Activated B cell treated with CpG ODN at 0.5 μM for 24 hours (primary cell): ENCODE measurements at regions of chr16 and their contacts with region 1.

Region 1: GRCh38 chr16:74695450-74696422 is 4.9 kb downstream of the MLKL start:
- DNase-seq: peak; percentile 44
- ATAC-seq: peak; percentile 89
- H3K4me3 Mint-ChIP-seq: peak overlapping the region; percentile 82
- H3K27ac Mint-ChIP-seq: peak overlapping the region; percentile 71
- H3K4me1 Mint-ChIP-seq: peaks cover 41% of the 10 kb centered on the region
- H3K27me3 Mint-ChIP-seq: no peaks in the 10 kb centered on the region
- CTCF ChIP-seq: no peak

Region 2: GRCh38 chr16:74466872-74467271 is 228.9 kb before region 1 on chr16:
- CTCF ChIA-PET with region 1: no interaction called
- POLR2A ChIA-PET with region 1: no interaction called
- intact Hi-C with region 1: no loop called
- DNase-seq: no peak
- ATAC-seq: no peak
- H3K4me3 Mint-ChIP-seq: no peak overlapping the region
- H3K27ac Mint-ChIP-seq: no peak overlapping the region
- H3K4me1 Mint-ChIP-seq: peaks cover 17% of the 10 kb centered on the region
- H3K27me3 Mint-ChIP-seq: no peaks in the 10 kb centered on the region
- CTCF ChIP-seq: no peak

Region 3: DNA sequence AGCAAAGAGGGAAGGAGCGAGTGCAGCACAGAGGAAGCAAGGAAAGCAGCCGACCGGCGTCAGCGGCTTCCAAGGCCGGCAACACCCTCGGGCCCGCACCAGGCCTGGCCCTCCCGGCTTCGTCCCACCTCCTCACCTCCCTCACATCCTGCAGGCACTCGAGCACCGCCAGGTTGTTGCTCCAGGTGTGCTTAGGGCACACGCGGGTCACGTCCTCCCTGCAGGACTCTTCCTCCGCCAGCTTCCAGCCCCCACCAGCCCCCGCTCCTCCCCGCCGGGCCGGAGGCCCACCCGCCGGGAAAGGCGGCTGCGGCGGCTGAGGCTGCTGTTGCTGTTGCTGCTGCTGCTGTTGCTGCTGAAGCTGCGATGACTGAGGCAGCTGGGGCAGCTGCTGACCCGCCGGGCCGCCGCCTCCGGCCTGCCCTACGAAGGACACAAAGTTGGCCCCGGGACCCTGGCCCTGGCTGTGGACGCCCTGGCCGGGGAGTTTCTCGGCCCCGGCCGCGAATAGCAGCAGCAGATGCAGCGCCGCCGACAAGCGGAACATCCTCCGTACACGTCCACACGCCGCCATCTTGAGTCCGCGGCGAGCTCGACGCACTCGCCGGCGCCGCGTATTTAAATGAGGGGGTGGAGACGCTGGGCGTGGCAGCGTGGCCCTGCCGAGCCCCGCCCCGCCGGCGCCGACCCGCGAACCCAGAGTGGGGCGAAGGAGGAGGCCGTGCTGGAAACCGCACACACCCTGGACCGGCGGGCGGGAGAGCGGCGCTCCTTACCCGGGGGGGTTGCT is 89.0 kb before region 1 on chr16 and contains the start of gene GLG1:
- CTCF ChIA-PET with region 1: no interaction called
- POLR2A ChIA-PET with region 1: interaction called, 8 read pairs
- intact Hi-C with region 1: loop called (anchors 2 kb)
- DNase-seq: peak; percentile 94
- ATAC-seq: peak; percentile 96
- H3K4me3 Mint-ChIP-seq: peak within 1 kb of the TSS; percentile 94
- H3K27ac Mint-ChIP-seq: peak within 1 kb of the TSS; percentile 91
- H3K4me1 Mint-ChIP-seq: peaks cover 45% of the 10 kb centered on the region
- H3K27me3 Mint-ChIP-seq: no peaks in the 10 kb centered on the region
- CTCF ChIP-seq: no peak
- total RNA-seq, gene GLG1: 72.7 and 81.4 TPM in 2 replicates

Region 4: DNA sequence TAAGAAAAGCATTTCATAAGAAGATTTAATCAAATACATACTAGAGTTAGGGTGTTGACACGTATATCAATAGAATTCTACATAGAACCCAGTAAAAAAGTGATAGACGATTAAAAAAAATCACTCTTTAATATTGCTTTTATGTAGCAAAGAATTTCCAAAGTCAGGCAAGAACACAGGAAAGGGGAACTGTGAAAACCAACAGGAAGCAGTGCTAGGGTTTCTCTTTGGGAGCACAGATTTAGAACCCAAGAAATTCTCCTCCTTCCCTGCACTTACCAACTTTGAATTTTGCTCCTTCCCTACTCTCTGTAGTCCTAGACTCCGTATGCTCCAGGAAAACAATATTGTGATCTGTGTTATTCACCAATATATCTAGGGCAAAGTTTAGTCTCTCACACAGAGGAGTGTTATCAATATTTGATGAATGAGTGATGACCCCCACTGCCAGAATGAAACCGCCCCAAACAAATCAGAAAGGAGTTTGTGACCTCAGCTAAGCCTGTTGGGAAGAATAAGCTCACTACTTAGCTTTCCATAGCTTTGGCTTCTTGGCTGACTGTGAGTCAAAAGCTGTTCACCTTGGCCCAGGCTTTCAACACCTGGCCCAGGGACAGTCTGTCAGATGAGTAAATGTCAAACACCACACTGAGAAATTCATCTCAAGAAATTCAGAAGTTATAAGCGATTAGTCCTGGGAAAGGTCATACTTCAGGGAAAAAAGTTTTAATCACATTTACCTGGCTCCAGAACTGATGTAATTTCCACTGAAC is 37.7 kb before region 1 on chr16:
- CTCF ChIA-PET with region 1: no interaction called
- POLR2A ChIA-PET with region 1: no interaction called
- intact Hi-C with region 1: no loop called
- DNase-seq: no peak
- ATAC-seq: no peak
- H3K4me3 Mint-ChIP-seq: no peak overlapping the region
- H3K27ac Mint-ChIP-seq: peak overlapping the region; percentile 50
- H3K4me1 Mint-ChIP-seq: peaks cover 49% of the 10 kb centered on the region
- H3K27me3 Mint-ChIP-seq: no peaks in the 10 kb centered on the region
- CTCF ChIP-seq: no peak

Region 5: DNA sequence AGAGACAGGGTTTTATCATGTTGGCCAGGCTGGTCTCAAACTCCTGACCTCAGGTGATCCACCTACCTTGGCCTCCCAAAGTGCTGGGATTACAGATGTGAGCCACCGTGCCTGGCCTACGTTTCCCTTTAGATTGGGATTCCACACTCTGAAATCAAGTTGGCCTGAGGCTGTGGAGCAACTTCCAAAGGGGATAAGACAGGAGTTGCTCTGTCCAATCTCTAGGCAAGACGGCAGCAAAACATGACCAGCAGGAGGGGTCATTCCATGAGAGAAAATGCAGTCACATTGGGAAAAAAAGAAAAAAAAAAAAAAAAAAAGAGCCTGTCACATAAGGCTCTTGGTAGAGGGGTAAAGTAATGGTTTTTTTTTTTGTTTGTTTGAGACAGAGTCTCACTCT is 11.6 kb before region 1 on chr16:
- CTCF ChIA-PET with region 1: no interaction called
- POLR2A ChIA-PET with region 1: interaction called, 6 read pairs
- intact Hi-C with region 1: loop called (anchors 1 kb)
- DNase-seq: no peak
- ATAC-seq: no peak
- H3K4me3 Mint-ChIP-seq: peak overlapping the region; percentile 7
- H3K27ac Mint-ChIP-seq: no peak overlapping the region
- H3K4me1 Mint-ChIP-seq: peaks cover 9% of the 10 kb centered on the region
- H3K27me3 Mint-ChIP-seq: no peaks in the 10 kb centered on the region
- CTCF ChIP-seq: no peak

Region 6: DNA sequence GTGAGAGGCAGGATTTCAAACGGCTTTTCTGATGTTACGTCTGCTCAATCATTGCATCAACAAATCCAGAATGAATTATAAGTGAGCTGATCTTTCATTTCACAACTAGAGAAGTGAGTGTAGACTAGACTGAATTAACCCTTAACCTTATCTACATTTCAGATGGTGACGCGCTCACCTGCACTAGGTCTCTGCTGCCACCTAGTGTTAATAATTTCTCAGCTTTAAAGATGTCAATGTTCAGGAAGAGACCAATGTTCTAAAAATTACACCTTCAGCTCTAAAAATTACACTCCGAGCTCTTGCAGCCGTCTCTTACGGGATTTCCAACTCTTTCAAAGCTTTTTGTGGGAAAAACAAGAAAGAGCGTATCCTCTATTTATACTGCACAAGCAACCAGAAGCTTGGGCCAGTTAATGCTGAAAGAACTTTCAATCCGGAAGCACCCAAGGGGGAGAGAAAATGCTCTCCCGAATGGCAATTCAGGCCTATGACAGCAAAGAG is 167.1 kb after region 1 on chr16:
- CTCF ChIA-PET with region 1: interaction called, 11 read pairs
- POLR2A ChIA-PET with region 1: no interaction called
- intact Hi-C with region 1: no loop called
- DNase-seq: no peak
- ATAC-seq: peak; percentile 28
- H3K4me3 Mint-ChIP-seq: no peak overlapping the region
- H3K27ac Mint-ChIP-seq: no peak overlapping the region
- H3K4me1 Mint-ChIP-seq: no peaks in the 10 kb centered on the region
- H3K27me3 Mint-ChIP-seq: no peaks in the 10 kb centered on the region
- CTCF ChIP-seq: peak; percentile 60